ENCODE measurements at regions of chr3 and their contacts with region 1.

Region 1: DNA sequence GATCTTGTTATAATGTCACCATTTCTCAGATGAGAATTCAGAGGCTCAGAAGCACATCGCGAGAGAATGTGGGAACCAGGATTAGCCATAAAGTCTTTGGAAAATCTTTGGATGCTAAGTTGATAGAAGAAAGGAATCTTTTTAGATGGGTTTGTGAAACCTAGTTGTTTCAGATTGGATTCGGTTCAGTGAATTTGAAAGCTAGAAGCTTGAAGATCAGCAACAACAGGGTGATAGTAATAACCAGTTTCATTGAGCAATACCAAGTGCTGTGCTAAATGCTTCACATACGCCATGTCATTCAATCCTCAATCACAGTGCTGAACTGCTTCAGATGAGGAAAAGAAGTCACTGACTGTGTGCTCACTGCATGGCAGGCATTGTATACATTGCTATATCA is 47.4 kb upstream of the MITF start:
- DNase-seq: no peak

Region 2: DNA sequence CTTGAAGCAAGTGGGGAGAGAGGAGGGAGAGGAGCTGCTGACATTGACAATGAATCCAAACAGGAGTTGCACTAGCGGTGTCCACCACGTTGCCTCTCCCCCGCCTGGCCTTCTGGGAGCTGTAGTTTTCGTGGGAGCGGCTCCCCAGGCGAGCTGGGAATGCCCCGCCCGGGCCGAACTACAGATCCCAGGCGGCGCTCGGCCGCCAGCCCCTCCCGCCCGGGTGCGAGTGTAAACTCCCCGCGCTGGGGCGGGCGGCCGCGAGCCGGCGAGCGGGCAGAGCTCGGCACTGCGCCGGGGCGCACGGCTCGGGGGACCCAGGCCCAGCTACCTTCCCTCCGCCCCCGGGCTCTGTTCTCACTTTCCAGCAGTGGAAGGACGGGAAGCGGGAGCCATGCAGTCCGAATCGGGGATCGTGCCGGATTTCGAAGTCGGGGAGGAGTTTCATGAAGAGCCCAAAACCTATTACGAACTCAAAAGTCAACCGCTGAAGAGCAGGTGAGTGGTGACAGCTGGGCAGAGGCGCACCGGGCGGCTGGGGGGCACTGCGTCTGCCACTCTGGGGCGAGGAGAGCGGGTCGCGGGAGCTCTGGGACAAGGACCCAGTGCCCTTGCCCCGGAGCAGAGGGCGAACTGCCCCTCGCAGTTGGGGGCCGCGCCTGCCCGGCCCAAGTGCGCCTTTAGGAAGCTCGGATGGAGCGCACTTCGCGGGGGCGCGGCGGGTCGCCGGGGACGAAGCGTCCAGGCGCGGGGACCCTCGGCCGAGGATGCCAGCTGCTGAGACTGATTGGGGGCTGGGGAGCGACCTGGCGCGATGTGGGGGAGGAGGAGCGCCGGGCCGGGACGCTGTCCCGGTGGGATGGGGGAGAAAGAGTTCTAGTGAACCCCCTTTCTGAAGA is 47.6 kb after region 1 on chr3 and contains the start of gene MITF:
- intact Hi-C with region 1: loop called (anchors 5 kb)
- DNase-seq: peak; percentile 86 to 98 (median 96)

Region 3: GRCh38 chr3:69791919-69792399 is 100.1 kb after region 1 on chr3:
- intact Hi-C with region 1: loop called (anchors 5 kb)
- DNase-seq: peak in 4 of 42 donors; percentile 10 to 62 (median 22)

Region 4: DNA sequence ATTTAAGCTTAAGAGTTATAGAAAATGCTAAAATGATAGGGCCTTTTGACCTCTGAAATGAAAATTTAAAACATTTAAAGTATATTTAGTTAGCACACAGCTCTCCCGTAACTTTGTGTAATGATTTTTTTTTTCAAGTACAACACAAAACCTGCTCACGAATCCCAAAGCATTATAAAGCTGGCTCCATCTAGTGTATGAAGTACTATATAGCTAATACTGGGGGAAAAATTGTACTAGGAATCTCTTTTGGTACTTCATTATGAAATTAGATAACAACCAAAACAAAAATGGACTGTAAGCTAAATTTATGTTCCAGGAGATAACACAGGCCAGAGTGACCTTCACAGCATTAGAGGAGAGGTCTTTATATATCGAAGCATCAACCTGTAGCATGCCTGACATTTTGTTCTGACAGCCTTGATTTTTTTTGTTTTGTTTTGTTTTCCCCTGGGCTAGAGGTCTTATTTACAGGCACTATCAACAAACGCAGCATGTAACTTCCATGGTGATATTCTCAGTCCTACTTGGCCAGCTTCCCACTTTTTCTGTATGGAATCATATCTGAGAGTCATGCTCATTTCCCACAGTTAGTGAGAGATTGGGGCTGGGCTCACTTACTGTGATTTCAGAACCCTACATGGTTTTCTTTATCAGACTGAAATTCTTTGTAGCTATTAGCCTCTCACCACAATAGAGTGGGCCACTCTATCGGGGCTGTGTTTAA is 163.7 kb after region 1 on chr3:
- intact Hi-C with region 1: loop called (anchors 5 kb)
- DNase-seq: peak in 1 of 42 donors; percentile 8

Region 5: DNA sequence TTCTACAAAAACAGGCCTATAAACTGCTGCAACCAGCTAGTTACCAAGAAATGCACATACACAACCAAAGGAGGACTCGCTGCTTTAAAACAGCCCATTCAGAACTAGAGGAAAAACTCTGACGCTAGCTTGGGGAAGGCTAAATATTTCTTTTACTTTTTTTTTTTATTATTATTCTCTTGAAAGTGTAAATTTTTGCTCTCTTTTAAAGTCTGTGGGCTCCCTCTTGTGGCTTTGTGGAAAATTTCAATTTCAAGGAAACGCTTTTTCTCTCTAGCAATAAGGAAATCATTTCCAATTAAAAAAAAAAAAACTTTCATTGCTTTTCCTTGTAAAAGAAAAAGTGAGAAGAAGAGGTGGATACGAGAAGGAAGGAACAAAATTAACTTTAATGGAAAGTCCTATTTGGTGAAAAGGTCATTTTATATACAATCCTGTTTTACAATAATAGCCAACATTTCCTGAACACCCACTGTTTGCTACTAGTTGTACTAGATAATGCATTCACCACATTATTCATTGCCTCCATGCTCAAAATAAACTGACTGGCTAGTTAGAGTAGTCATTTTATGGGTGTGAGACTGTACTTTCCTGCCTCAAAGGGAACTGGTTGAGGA is 256.5 kb after region 1 on chr3:
- intact Hi-C with region 1: loop called (anchors 5 kb)
- DNase-seq: peak in 5 of 42 donors; percentile 25 to 68 (median 39)